ENCODE measurements at regions of chr6 and their contacts with region 1.

Region 1: GRCh38 chr6:69796642-69797390 is at the start of gene LMBRD1:
- DNase-seq: peak; percentile 96
- H3K4me3 Mint-ChIP-seq: peak within 1 kb of the TSS; percentile 90
- H3K27ac Mint-ChIP-seq: peak within 1 kb of the TSS; percentile 89
- H3K4me1 Mint-ChIP-seq: peaks cover 33% of the 10 kb centered on the region
- H3K27me3 Mint-ChIP-seq: no peaks in the 10 kb centered on the region
- total RNA-seq, gene LMBRD1: 18.9 and 20.8 TPM in 2 replicates

Region 2: GRCh38 chr6:69735027-69735426 is 61.8 kb before region 1 on chr6:
- intact Hi-C with region 1: no loop called
- DNase-seq: no peak
- H3K4me3 Mint-ChIP-seq: no peak overlapping the region
- H3K27ac Mint-ChIP-seq: no peak overlapping the region
- H3K4me1 Mint-ChIP-seq: no peaks in the 10 kb centered on the region
- H3K27me3 Mint-ChIP-seq: no peaks in the 10 kb centered on the region

Region 3: DNA sequence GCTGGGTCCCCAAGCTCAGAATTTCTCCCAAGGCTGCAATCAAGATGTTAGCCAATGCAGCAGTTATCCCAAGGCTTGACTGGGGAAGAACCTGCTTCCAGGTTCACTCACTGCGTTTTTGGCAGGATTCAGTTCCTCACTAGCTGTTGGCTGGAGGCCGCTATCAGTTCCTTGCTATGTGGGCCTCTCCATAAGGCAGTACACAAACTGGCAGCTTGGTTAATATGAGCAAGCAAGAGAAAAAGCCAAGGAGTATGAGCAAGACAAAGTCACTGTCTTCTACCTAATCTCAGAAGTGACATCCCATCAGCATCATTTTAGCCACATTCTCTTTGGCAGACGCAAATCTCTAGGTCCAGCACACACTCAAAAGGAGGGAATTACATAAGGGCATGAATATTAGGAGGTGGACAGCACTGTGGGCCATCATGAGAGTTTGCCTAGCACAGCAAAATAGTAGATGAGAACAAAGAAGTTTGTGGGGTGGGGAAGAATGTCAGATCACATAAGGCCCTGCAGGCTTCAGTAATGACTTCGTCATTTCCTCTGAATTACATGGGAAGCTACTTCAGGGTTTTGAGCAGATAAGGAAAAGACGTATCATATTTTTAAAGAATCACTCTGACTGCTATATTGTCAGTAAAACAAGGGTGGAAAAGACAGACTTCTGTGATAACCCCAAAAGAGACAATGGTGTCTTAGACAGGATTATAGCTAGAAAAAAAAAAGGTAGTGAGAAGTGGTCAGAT is 25.5 kb before region 1 on chr6:
- intact Hi-C with region 1: loop called (anchors 1 kb)
- DNase-seq: no peak
- H3K4me3 Mint-ChIP-seq: no peak overlapping the region
- H3K27ac Mint-ChIP-seq: peak overlapping the region; percentile 74
- H3K4me1 Mint-ChIP-seq: peaks cover 31% of the 10 kb centered on the region
- H3K27me3 Mint-ChIP-seq: no peaks in the 10 kb centered on the region

Region 4: DNA sequence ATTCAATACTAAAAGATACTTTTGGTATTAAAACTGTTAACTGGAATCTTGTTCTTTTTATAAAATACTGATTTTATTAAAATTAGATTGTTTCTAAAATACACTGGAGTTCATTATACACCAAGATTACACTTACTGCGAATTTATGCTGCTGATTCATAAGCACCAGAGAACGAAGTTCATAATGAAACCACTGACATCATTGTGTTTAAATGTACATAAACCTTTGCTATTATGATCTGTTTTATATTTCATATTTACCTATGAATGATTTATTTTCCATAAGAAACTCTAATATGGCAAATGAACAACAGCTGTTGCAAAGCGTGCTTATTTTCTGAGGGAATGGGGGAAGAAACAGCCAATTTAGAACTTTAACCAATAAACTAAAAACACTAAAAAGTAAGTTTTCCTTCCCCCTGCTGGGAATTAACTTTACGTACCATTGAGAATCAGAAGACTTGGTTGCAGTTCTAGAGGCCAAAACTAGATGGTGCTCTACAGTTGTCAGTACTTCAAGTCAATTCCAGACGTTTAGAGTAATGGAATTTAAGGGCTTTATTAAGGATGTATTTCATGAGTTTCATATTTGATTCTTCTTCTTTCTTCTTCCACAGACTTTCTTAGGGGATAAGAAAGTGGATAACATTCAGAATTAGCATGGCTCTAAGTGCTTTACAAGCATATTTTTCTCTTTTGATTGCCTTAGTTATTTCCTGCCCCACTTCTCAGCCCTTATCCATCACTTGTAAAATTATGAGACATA is 38.8 kb after region 1 on chr6:
- intact Hi-C with region 1: no loop called
- DNase-seq: no peak
- H3K4me3 Mint-ChIP-seq: no peak overlapping the region
- H3K27ac Mint-ChIP-seq: no peak overlapping the region
- H3K4me1 Mint-ChIP-seq: peaks cover 7% of the 10 kb centered on the region
- H3K27me3 Mint-ChIP-seq: peaks cover 28% of the 10 kb centered on the region

Region 5: GRCh38 chr6:69866770-69867638 is 70.2 kb after region 1 on chr6:
- intact Hi-C with region 1: loop called (anchors 2 kb)
- DNase-seq: peak; percentile 49
- H3K4me3 Mint-ChIP-seq: peak overlapping the region; percentile 76
- H3K27ac Mint-ChIP-seq: no peak overlapping the region
- H3K4me1 Mint-ChIP-seq: peaks cover 18% of the 10 kb centered on the region
- H3K27me3 Mint-ChIP-seq: peaks cover 53% of the 10 kb centered on the region

Region 6: DNA sequence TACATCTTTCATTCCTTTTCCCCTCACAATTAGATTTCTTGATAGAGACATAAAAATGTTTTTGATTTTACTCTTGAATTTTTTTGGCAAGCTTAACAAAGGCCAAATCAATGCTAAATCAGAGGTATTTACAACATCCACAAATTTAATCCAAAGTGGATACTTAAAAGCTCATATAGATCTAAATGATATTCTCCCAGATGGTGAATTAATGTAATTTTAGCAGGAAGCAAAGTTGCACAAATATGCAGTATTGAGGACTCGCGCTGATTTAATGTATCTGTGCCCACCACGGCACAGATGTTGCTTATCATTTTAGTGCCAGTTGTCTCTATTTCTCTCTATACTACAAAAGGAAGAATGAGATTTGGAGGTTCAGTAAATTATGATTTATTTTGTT is 237.0 kb after region 1 on chr6:
- intact Hi-C with region 1: no loop called
- DNase-seq: no peak
- H3K4me3 Mint-ChIP-seq: no peak overlapping the region
- H3K27ac Mint-ChIP-seq: no peak overlapping the region
- H3K4me1 Mint-ChIP-seq: no peaks in the 10 kb centered on the region
- H3K27me3 Mint-ChIP-seq: no peaks in the 10 kb centered on the region